ENCODE measurements at regions of chr5 and their contacts with region 1.

Region 1: DNA sequence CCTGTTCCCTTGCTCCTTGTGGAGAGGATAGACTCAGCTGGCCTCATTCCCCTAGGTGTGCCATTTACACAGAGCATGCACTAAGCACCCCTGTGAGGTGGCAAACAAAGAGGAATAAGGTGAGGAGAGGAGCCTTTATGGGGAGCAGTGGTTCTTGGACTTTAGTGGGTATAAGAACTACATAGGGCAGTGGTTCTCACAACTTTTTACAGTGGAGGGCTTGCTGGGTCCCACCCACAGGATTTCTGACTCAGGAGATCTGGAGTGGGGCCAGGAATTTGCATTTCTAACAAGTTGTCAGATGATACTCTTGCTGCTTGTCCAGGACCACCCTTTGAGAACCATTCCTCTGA is 42.0 kb downstream of the CSF1R start:
- DNase-seq: no peak
- H3K4me3 ChIP-seq: no peak overlapping the region
- H3K4me3 Mint-ChIP-seq: no peak overlapping the region
- H3K27ac Mint-ChIP-seq: no peak overlapping the region
- H3K4me1 ChIP-seq: no peaks in the 10 kb centered on the region
- H3K4me1 Mint-ChIP-seq: no peaks in the 10 kb centered on the region
- H3K27me3 ChIP-seq: no peaks in the 10 kb centered on the region
- H3K27me3 Mint-ChIP-seq: no peaks in the 10 kb centered on the region
- CTCF ChIP-seq: no peak

Region 2: DNA sequence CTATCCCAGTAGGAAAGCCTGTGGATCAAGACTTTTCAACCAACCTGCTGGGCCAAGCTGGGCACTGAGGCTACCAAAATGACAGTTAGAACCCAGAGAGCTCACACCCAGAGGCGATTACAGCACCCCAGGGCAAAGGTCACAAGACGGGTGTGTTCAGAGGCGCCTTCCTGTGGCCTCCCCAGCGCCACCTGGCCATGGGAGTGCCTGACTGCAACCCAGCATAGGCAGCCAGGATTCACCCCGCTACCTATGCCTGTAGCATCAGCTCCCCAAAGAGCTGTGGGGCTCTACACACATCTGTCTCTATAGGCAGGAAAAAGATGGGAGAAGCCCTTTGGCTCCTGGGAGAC is 77.8 kb after region 1 on chr5:
- CTCF ChIA-PET with region 1: interaction called, 3 read pairs
- POLR2A ChIA-PET with region 1: no interaction called
- intact Hi-C with region 1: loop called (anchors 2 kb)
- DNase-seq: peak; percentile 74 to 75
- H3K4me3 ChIP-seq: no peak overlapping the region
- H3K4me3 Mint-ChIP-seq: no peak overlapping the region
- H3K27ac Mint-ChIP-seq: peak overlapping the region; percentile 2
- H3K4me1 ChIP-seq: peaks cover 18% of the 10 kb centered on the region
- H3K4me1 Mint-ChIP-seq: peaks cover 10% of the 10 kb centered on the region
- H3K27me3 ChIP-seq: no peaks in the 10 kb centered on the region
- H3K27me3 Mint-ChIP-seq: no peaks in the 10 kb centered on the region
- CTCF ChIP-seq: peak; percentile 66 to 72

Region 3: DNA sequence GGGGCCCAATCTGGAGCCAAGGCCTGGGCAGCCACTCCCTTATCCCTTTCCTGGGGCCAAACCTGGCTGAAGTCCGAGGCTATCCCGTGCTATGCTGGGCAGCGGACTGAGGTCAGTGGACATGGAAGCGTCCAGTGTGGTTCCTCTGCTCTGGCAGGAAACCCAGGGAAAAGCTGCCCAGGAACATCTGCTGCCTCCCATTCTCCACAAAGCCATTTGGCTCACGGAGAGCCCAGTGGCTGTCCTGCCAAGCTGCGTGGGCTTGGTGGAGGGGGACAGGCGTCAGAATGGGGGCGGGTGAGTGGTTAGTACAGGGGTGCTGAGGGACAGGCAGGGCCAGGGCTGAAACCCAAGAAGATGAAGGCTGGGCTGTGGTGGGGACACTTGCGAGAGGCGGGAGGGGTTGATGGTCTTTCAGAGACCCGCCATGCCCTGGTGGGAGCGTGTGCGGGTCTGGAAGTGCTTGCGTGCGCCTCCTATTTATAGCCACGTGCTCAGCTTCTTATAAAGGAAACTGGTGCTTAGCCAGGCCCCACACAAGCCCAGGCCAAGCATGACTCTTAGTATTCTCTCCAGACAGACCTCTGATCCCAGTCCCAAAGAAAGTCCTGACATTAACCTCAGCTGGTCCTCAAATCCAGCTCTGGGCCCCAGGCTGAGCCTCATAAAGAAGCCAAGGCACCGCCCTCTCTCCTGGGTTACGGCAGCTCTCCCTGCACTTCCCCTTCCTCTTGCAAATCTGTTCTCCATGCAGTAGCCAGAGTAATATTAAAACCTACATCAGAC is 136.1 kb after region 1 on chr5:
- CTCF ChIA-PET with region 1: no interaction called
- POLR2A ChIA-PET with region 1: no interaction called
- intact Hi-C with region 1: no loop called
- DNase-seq: no peak
- H3K4me3 ChIP-seq: no peak overlapping the region
- H3K4me3 Mint-ChIP-seq: no peak overlapping the region
- H3K27ac Mint-ChIP-seq: no peak overlapping the region
- H3K4me1 ChIP-seq: peaks cover 9% of the 10 kb centered on the region
- H3K4me1 Mint-ChIP-seq: peaks cover 14% of the 10 kb centered on the region
- H3K27me3 ChIP-seq: no peaks in the 10 kb centered on the region
- H3K27me3 Mint-ChIP-seq: no peaks in the 10 kb centered on the region
- CTCF ChIP-seq: no peak

Region 4: GRCh38 chr5:150217873-150218692 is 173.8 kb after region 1 on chr5:
- CTCF ChIA-PET with region 1: no interaction called
- POLR2A ChIA-PET with region 1: no interaction called
- intact Hi-C with region 1: loop called (anchors 5 kb)
- DNase-seq: peak; percentile 83 to 89
- H3K4me3 ChIP-seq: no peak overlapping the region
- H3K4me3 Mint-ChIP-seq: no peak overlapping the region
- H3K27ac Mint-ChIP-seq: peak overlapping the region; percentile 54
- H3K4me1 ChIP-seq: peaks cover 19% of the 10 kb centered on the region
- H3K4me1 Mint-ChIP-seq: peaks cover 18% of the 10 kb centered on the region
- H3K27me3 ChIP-seq: no peaks in the 10 kb centered on the region
- H3K27me3 Mint-ChIP-seq: no peaks in the 10 kb centered on the region
- CTCF ChIP-seq: peak; percentile 83 to 93

Region 5: GRCh38 chr5:150339165-150339564 is 294.9 kb after region 1 on chr5:
- CTCF ChIA-PET with region 1: no interaction called
- POLR2A ChIA-PET with region 1: no interaction called
- intact Hi-C with region 1: no loop called
- DNase-seq: no peak
- H3K4me3 ChIP-seq: no peak overlapping the region
- H3K4me3 Mint-ChIP-seq: no peak overlapping the region
- H3K27ac Mint-ChIP-seq: no peak overlapping the region
- H3K4me1 ChIP-seq: no peaks in the 10 kb centered on the region
- H3K4me1 Mint-ChIP-seq: peaks cover 7% of the 10 kb centered on the region
- H3K27me3 ChIP-seq: no peaks in the 10 kb centered on the region
- H3K27me3 Mint-ChIP-seq: no peaks in the 10 kb centered on the region
- CTCF ChIP-seq: no peak

Measured in Caco-2 (cell line).